ENCODE measurements at regions of chr4 and their contacts with region 1.

Region 1: DNA sequence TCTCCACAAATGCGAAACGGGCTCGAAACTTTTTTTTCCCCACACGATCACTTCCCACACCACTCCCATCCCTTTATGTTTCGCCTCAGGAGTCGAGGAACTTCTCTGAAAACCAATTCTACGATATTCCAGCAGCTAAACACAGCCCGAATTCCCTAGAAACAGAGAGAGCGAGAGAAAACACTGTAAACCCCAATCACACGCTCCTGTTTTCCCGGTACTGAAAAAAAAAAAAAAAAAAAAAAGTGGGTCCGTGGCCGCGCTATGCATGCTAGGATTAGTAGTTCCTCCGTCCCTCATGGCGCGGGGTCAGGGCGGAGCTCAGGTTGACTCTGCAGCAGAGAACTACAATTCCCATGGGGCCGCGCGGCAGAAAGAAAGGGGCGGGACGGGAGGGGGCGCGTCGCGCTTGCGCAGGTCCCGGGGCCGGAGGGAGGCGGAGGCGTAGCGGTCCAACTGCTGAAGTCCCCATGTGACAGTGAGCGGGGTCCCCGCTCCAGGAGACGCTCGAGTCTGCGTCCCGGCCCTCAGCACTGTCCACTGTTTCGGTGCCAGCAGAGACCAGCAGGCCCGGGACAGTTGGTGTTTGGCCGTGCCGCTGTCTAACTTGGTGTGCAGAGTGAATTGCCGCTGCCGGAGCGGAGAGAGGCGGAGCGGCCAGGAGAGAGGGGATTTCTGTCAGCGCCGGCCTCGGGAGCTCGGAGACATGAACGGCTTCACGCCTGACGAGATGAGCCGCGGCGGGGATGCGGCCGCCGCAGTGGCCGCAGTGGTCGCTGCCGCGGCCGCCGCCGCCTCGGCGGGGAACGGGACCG is at the start of gene SAP30:
- DNase-seq: peak; percentile 99
- ATAC-seq: peak; percentile 96 to 97 (median 96)
- H3K4me3 ChIP-seq: peak within 1 kb of the TSS; percentile 66 to 92 (median 85)
- H3K27ac ChIP-seq: peak within 1 kb of the TSS; percentile 91 to 99 (median 96)
- H3K4me1 ChIP-seq: peaks cover 0 to 65% (median 26%) of the 10 kb centered on the region in 12 donors
- H3K27me3 ChIP-seq: no peaks in the 10 kb centered on the region
- CTCF ChIP-seq: no peak
- POLR2A ChIP-seq: peak; percentile 86 to 98
- total RNA-seq, gene SAP30: 10.8 to 29.1 (median 16.0) TPM

Region 2: GRCh38 chr4:173334085-173334772 is 36.5 kb before region 1 on chr4 and contains the start of gene HMGB2:
- intact Hi-C with region 1: loop called (anchors 1 to 5 kb)
- DNase-seq: peak; percentile 100
- ATAC-seq: peak; percentile 98 to 100 (median 99)
- H3K4me3 ChIP-seq: peak within 1 kb of the TSS; percentile 65 to 98 (median 92)
- H3K27ac ChIP-seq: peak within 1 kb of the TSS; percentile 97 to 100 (median 98)
- H3K4me1 ChIP-seq: peaks cover 0 to 45% (median 19%) of the 10 kb centered on the region in 12 donors
- H3K27me3 ChIP-seq: no peaks in the 10 kb centered on the region
- CTCF ChIP-seq: no peak
- POLR2A ChIP-seq: peak; percentile 90 to 98
- total RNA-seq, gene HMGB2: 28.5 to 67.5 (median 38.2) TPM

Region 3: DNA sequence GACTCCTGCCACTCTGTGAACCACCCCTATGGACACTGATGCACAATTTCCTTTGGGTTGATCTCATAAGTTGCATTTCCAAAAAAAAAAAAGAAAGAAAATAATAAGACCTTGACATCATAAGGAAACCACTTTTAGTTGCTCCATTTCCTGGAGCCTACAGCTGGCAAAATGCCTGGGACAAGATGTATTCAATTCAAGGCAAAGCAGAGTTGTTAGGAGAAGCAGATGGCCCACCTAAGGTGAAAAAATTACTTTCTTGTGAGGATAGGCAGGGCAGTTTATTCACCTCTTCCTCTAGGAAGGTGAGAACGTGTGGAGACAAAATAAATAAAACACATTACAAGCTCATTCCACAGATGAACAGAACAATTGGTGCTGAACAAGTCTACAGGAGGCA is 42.4 kb after region 1 on chr4:
- intact Hi-C with region 1: loop called in 4 of 10 experiments (anchors 5 kb)
- DNase-seq: no peak
- ATAC-seq: peak in 1 of 4 donors; percentile 19
- H3K4me3 ChIP-seq: no peak overlapping the region
- H3K27ac ChIP-seq: peak overlapping the region in 1 of 12 donors; percentile 20
- H3K4me1 ChIP-seq: peaks cover 0 to 54% (median 0%) of the 10 kb centered on the region in 12 donors
- H3K27me3 ChIP-seq: no peaks in the 10 kb centered on the region
- CTCF ChIP-seq: no peak
- POLR2A ChIP-seq: no peak